ENCODE measurements at regions of chr17 and their contacts with region 1.

Region 1: GRCh38 chr17:66727639-66728570 is 107.0 kb upstream of the CACNG5 start:
- DNase-seq: peak; percentile 34
- ATAC-seq: peak; percentile 96
- H3K4me3 ChIP-seq: no peak overlapping the region
- H3K27ac ChIP-seq: no peak overlapping the region
- H3K4me1 ChIP-seq: peaks cover 0 to 11% of the 10 kb centered on the region in 2 experiments; a peak in 2 of 4 replicates
- H3K27me3 ChIP-seq: no peaks in the 10 kb centered on the region
- CTCF ChIP-seq: peak; percentile 81 to 91 (median 91)
- POLR2A ChIP-seq: no peak
- RAD21 ChIP-seq: peak; percentile 86

Region 2: GRCh38 chr17:66459811-66460270 is 268.1 kb before region 1 on chr17:
- CTCF ChIA-PET with region 1: no interaction called
- POLR2A ChIA-PET with region 1: no interaction called
- RAD21 ChIA-PET with region 1: no interaction called
- intact Hi-C with region 1: no loop called
- DNase-seq: peak; percentile 77
- ATAC-seq: peak; percentile 92
- H3K4me3 ChIP-seq: peak overlapping the region in 1 of 2 experiments; percentile 19; a peak in 1 of 4 replicates
- H3K27ac ChIP-seq: peak overlapping the region; percentile 33; the same call in 1 of the 2 replicates
- H3K4me1 ChIP-seq: peaks cover 21 to 27% of the 10 kb centered on the region in 2 experiments
- H3K27me3 ChIP-seq: no peaks in the 10 kb centered on the region
- CTCF ChIP-seq: no peak
- POLR2A ChIP-seq: no peak
- RAD21 ChIP-seq: 0 out of 2 replicates have a peak, but pooled peaks have one; percentile 27

Region 3: DNA sequence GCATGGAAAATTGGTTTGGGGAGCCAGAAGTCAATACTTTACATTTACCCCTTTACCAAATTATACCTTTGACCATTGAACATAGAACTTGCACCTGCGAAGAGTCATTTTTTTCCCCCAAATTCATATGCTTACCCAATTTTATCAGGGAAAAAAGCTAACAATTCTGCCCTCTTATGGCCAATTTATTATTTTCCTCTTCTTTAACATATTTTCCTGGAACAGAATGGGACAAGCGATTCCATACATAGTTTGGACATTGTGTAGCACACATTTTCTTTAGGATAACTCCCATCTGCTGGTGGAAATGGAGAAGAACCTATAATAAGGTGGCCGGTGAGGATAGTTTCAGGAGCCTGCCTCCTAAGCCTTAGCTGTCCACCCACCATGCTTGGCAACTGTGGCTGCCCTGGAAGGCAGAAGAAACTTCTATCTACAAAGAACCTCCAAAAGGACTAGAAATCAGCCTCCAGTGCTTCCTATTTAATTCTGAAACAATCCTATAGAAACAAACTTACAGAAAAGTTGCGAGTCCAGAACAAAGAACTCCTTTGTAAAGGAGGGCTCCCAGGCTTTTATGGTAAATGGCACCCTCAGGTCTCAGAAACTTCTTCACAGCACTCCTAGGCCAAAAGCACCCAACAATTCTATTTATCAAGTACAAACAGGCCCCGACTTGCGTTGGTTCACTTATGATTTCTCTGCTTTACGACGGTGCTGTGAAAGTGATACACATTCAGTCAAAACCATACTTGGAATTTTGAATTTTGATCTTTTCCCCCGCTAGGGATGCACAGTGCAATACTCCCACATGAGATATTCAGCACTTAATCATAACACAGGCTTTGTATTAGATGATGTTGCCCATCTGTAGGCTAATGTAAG is 172.5 kb after region 1 on chr17:
- CTCF ChIA-PET with region 1: interaction called, 22 read pairs
- POLR2A ChIA-PET with region 1: no interaction called
- RAD21 ChIA-PET with region 1: interaction called in 1 of 2 experiments, 3 read pairs
- intact Hi-C with region 1: loop called (anchors 1 kb)
- DNase-seq: peak; percentile 28
- ATAC-seq: peak; percentile 76
- H3K4me3 ChIP-seq: no peak overlapping the region
- H3K27ac ChIP-seq: no peak overlapping the region
- H3K4me1 ChIP-seq: peaks cover 0 to 3% of the 10 kb centered on the region in 2 experiments; a peak in 1 of 4 replicates
- H3K27me3 ChIP-seq: no peaks in the 10 kb centered on the region
- CTCF ChIP-seq: peak; percentile 38 to 82 (median 73); a peak in 5 of 6 replicates
- POLR2A ChIP-seq: no peak
- RAD21 ChIP-seq: peak; percentile 69

Region 4: GRCh38 chr17:66906321-66907278 is 178.7 kb after region 1 on chr17:
- CTCF ChIA-PET with region 1: interaction called, 7 read pairs
- POLR2A ChIA-PET with region 1: no interaction called
- RAD21 ChIA-PET with region 1: no interaction called
- intact Hi-C with region 1: loop called (anchors 1 kb)
- DNase-seq: peak; percentile 81
- ATAC-seq: peak; percentile 73
- H3K4me3 ChIP-seq: no peak overlapping the region
- H3K27ac ChIP-seq: no peak overlapping the region
- H3K4me1 ChIP-seq: peaks cover 0 to 3% of the 10 kb centered on the region in 2 experiments; a peak in 1 of 4 replicates
- H3K27me3 ChIP-seq: no peaks in the 10 kb centered on the region
- CTCF ChIP-seq: peak; percentile 91 to 99 (median 98)
- POLR2A ChIP-seq: peak; percentile 40
- RAD21 ChIP-seq: peak; percentile 96

Region 5: DNA sequence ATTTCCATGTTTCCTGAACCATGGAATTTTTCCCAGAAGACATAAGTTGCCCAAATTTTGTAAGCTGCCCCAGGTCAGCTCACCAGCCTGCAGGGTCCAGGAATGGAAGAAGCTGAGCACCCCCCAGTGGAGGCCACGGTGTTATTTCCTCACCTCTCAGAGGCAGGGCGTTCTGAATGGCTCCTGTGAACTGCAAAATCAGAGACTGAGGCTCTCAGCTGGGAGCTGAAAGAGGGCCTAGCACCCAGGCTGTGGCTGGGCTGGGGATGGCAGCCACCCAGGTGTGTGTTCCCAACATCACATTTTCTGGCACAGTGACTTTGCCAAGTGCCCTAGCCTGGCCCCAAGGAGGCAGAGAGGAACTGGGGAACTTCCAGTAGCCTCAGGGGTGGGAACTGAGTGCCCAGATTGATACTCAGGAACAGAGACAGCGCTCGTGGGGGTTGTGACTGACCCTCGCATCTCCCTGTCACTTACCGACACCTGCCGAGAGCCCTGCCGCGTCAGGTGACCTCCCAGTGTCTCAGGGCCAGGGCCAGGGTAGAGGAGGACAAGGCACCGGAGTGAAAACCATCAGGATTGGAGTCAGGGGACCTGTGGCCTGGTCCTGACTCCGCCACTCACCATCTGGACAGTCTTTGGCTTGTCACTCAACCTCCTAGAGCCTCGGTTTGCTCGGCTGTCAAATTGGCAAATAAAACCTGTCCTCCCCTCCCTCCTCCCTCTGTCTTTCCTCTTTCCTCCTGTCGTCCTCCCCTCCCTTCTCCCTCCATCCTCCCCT is 247.9 kb after region 1 on chr17:
- CTCF ChIA-PET with region 1: interaction called, 20 read pairs
- POLR2A ChIA-PET with region 1: no interaction called
- RAD21 ChIA-PET with region 1: interaction called, 3 to 5 read pairs
- intact Hi-C with region 1: loop called (anchors 1 kb)
- DNase-seq: peak; percentile 48
- ATAC-seq: peak; percentile 94
- H3K4me3 ChIP-seq: no peak overlapping the region
- H3K27ac ChIP-seq: no peak overlapping the region
- H3K4me1 ChIP-seq: peaks cover 10 to 16% of the 10 kb centered on the region in 2 experiments; a peak in 2 of 4 replicates
- H3K27me3 ChIP-seq: no peaks in the 10 kb centered on the region
- CTCF ChIP-seq: peak; percentile 71 to 92 (median 86)
- POLR2A ChIP-seq: no peak
- RAD21 ChIP-seq: peak; percentile 98

Region 6: DNA sequence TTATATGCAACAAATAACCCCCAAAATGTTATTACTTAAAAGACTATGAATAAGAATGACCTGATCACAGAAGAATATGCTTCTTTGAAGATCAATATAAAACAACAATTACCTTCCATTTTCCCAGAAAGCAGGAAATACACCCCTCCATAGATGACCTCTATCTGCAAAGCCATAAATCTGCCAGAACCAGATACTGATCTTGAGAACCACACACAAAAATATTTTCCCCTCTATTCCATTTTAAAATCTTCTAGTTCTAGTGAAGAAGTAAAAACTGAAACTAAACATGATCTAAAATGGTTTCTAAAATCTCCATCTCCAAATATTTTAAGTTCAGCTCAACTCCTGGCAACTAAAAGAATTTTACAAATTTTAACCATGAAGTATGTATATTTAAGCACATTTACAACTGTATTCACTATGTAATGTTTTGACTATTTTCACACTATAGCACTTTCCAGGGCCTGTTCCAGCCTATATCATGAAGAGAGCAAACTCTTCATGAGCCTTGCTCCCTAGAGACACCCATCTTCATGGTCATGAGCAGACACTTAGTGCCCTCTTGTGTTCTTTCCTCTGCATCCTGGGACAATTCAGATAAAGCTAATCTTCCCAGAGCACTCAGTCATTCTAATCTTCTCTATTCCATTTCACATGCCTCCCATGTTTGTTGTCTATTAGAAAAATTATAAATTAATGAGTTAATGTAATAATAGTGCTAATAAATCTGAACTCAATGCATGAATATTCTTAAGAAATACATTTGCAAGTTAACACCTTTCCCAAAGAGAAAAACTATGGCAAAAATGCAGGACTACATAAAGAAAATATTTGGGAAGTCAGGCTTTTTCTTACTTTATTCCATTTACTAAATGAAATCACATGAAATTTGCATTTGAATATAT is 430.1 kb after region 1 on chr17:
- CTCF ChIA-PET with region 1: interaction called, 19 read pairs
- POLR2A ChIA-PET with region 1: no interaction called
- RAD21 ChIA-PET with region 1: interaction called in 1 of 2 experiments, 3 read pairs
- intact Hi-C with region 1: no loop called
- DNase-seq: peak; percentile 10
- ATAC-seq: peak; percentile 92
- H3K4me3 ChIP-seq: no peak overlapping the region
- H3K27ac ChIP-seq: no peak overlapping the region
- H3K4me1 ChIP-seq: no peaks in the 10 kb centered on the region
- H3K27me3 ChIP-seq: no peaks in the 10 kb centered on the region
- CTCF ChIP-seq: peak; percentile 40 to 49 (median 41); a peak in 5 of 6 replicates
- POLR2A ChIP-seq: no peak
- RAD21 ChIP-seq: peak; percentile 71

Measured in HCT116 (cell line).